Activated CD4-positive, alpha-beta memory T cell treated with anti-CD3 and anti-CD28 coated beads, Interleukin-2, amount 10 ng/mL, durations not matched to agents 7 days and 5 days (primary cell): ENCODE measurements at regions of chr5 and their contacts with region 1.

Region 1: GRCh38 chr5:111495159-111495558 is 17.2 kb downstream of the STARD4 start:
- DNase-seq: no peak
- H3K4me3 Mint-ChIP-seq: no peak overlapping the region
- H3K27ac Mint-ChIP-seq: no peak overlapping the region
- H3K4me1 Mint-ChIP-seq: peaks cover 17% of the 10 kb centered on the region
- H3K27me3 Mint-ChIP-seq: no peaks in the 10 kb centered on the region

Region 2: GRCh38 chr5:111384220-111384619 is 110.9 kb before region 1 on chr5:
- CTCF ChIA-PET with region 1: no interaction called
- POLR2A ChIA-PET with region 1: no interaction called
- DNase-seq: no peak
- H3K4me3 Mint-ChIP-seq: no peak overlapping the region
- H3K27ac Mint-ChIP-seq: no peak overlapping the region
- H3K4me1 Mint-ChIP-seq: no peaks in the 10 kb centered on the region
- H3K27me3 Mint-ChIP-seq: no peaks in the 10 kb centered on the region

Region 3: GRCh38 chr5:111512375-111513130 is 17.4 kb after region 1 on chr5 and contains the start of gene STARD4:
- CTCF ChIA-PET with region 1: no interaction called
- POLR2A ChIA-PET with region 1: interaction called, 36 read pairs
- DNase-seq: peak; percentile 96
- H3K4me3 Mint-ChIP-seq: peak within 1 kb of the TSS; percentile 89
- H3K27ac Mint-ChIP-seq: peak within 1 kb of the TSS; percentile 88
- H3K4me1 Mint-ChIP-seq: peaks cover 46% of the 10 kb centered on the region
- H3K27me3 Mint-ChIP-seq: no peaks in the 10 kb centered on the region
- total RNA-seq, gene STARD4: 71.8 to 74.9 TPM

Region 4: GRCh38 chr5:111762895-111763294 is 267.7 kb after region 1 on chr5:
- CTCF ChIA-PET with region 1: no interaction called
- POLR2A ChIA-PET with region 1: no interaction called
- DNase-seq: no peak
- H3K4me3 Mint-ChIP-seq: no peak overlapping the region
- H3K27ac Mint-ChIP-seq: no peak overlapping the region
- H3K4me1 Mint-ChIP-seq: peaks cover 5% of the 10 kb centered on the region
- H3K27me3 Mint-ChIP-seq: peaks cover 33% of the 10 kb centered on the region